ENCODE measurements at regions of chr1 and their contacts with region 1.

Region 1: DNA sequence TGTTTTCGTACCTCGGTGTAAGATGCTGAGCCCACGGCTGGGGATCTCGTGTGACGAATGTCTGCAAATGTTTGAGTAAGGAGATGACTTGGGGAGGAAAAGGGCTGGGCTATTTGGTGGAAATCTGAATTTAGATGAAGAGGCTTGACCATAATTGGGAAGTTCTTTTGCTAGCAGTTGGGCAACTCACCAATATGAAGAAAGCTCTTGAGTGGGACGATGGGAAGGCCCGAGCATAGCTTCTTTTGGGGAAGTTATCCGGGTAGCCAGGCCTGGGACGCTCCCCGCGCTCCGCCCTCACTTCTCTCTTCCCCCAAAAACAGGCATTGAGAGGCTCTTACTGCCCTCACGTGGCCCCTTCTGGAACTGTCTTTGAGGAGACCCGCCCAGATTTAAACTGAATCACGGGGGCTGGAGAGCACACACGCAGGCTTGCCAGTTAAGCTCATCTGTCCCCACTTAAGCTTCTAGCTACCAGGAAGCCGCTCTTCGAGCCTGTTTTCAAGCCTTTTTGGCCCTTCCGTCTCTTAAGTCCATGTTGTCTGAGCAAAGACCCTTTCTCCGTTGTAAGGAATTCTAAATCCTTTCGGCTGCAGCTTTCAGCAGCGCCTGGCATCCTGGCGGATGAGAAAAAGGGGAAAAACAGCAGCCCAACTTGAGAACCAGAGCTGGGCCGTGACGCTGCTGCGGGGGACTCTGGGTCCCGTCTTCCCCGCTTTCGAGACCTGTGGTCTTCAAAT is 93.1 kb downstream of the NID1 start:
- DNase-seq: peak; percentile 81 to 93 (median 89)
- ATAC-seq: peak; percentile 99
- H3K4me3 ChIP-seq: peak overlapping the region; percentile 20 to 46
- H3K4me3 Mint-ChIP-seq: peak overlapping the region; percentile 78
- H3K27ac ChIP-seq: peak overlapping the region; percentile 53 to 54
- H3K27ac Mint-ChIP-seq: peak overlapping the region; percentile 99
- H3K4me1 ChIP-seq: peaks cover 7% of the 10 kb centered on the region
- H3K4me1 Mint-ChIP-seq: peaks cover 16% of the 10 kb centered on the region
- H3K27me3 ChIP-seq: no peaks in the 10 kb centered on the region
- H3K27me3 Mint-ChIP-seq: no peaks in the 10 kb centered on the region
- CTCF ChIP-seq: peak; percentile 82

Region 2: GRCh38 chr1:235758931-235759330 is 212.8 kb before region 1 on chr1:
- CTCF ChIA-PET with region 1: interaction called, 10 read pairs
- POLR2A ChIA-PET with region 1: interaction called, 3 read pairs
- intact Hi-C with region 1: no loop called
- DNase-seq: no peak
- ATAC-seq: no peak
- H3K4me3 ChIP-seq: no peak overlapping the region
- H3K4me3 Mint-ChIP-seq: no peak overlapping the region
- H3K27ac ChIP-seq: no peak overlapping the region
- H3K27ac Mint-ChIP-seq: no peak overlapping the region
- H3K4me1 ChIP-seq: no peaks in the 10 kb centered on the region
- H3K4me1 Mint-ChIP-seq: no peaks in the 10 kb centered on the region
- H3K27me3 ChIP-seq: no peaks in the 10 kb centered on the region
- H3K27me3 Mint-ChIP-seq: no peaks in the 10 kb centered on the region
- CTCF ChIP-seq: no peak

Region 3: DNA sequence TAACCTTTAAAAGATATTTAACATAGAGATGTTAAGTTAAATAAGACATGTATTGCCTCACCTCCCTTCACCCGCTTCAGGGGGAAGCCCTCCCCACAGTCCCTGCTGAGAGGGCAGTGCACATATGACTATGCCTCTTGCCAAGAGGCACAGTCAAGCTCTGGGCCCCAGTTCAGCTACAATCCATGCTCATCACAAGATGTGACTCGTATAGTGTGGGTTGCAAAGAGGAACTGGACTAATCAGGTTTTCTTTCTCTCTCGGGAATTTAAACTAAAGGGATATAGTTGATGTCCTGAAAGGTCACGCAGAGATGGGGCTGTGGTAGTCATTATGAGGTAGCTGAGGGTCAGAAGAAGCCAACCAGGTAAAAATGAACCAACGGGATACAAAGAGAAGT is 140.6 kb before region 1 on chr1:
- CTCF ChIA-PET with region 1: interaction called, 11 read pairs
- POLR2A ChIA-PET with region 1: no interaction called
- intact Hi-C with region 1: no loop called
- DNase-seq: peak in 3 of 9 experiments; percentile 8 to 36 (median 14)
- ATAC-seq: no peak
- H3K4me3 ChIP-seq: no peak overlapping the region
- H3K4me3 Mint-ChIP-seq: no peak overlapping the region
- H3K27ac ChIP-seq: no peak overlapping the region
- H3K27ac Mint-ChIP-seq: no peak overlapping the region
- H3K4me1 ChIP-seq: no peaks in the 10 kb centered on the region
- H3K4me1 Mint-ChIP-seq: peaks cover 11% of the 10 kb centered on the region
- H3K27me3 ChIP-seq: no peaks in the 10 kb centered on the region
- H3K27me3 Mint-ChIP-seq: no peaks in the 10 kb centered on the region
- CTCF ChIP-seq: no peak

Region 4: GRCh38 chr1:235866913-235867845 is 104.6 kb before region 1 on chr1:
- CTCF ChIA-PET with region 1: interaction called, 103 read pairs
- POLR2A ChIA-PET with region 1: interaction called, 23 read pairs
- intact Hi-C with region 1: loop called (anchors 1 kb)
- DNase-seq: peak; percentile 96 to 99 (median 98)
- ATAC-seq: peak; percentile 75
- H3K4me3 ChIP-seq: peak overlapping the region; percentile 74 to 89
- H3K4me3 Mint-ChIP-seq: peak overlapping the region; percentile 95
- H3K27ac ChIP-seq: peak overlapping the region; percentile 95 to 99
- H3K27ac Mint-ChIP-seq: peak overlapping the region; percentile 99
- H3K4me1 ChIP-seq: peaks cover 27% of the 10 kb centered on the region
- H3K4me1 Mint-ChIP-seq: peaks cover 52% of the 10 kb centered on the region
- H3K27me3 ChIP-seq: no peaks in the 10 kb centered on the region
- H3K27me3 Mint-ChIP-seq: no peaks in the 10 kb centered on the region
- CTCF ChIP-seq: no peak

Region 5: GRCh38 chr1:235933017-235933765 is 38.5 kb before region 1 on chr1:
- CTCF ChIA-PET with region 1: interaction called, 10 read pairs
- POLR2A ChIA-PET with region 1: no interaction called
- intact Hi-C with region 1: no loop called
- DNase-seq: peak in 2 of 9 experiments; percentile 36 to 47
- ATAC-seq: no peak
- H3K4me3 ChIP-seq: no peak overlapping the region
- H3K4me3 Mint-ChIP-seq: no peak overlapping the region
- H3K27ac ChIP-seq: no peak overlapping the region
- H3K27ac Mint-ChIP-seq: no peak overlapping the region
- H3K4me1 ChIP-seq: no peaks in the 10 kb centered on the region
- H3K4me1 Mint-ChIP-seq: peaks cover 22% of the 10 kb centered on the region
- H3K27me3 ChIP-seq: no peaks in the 10 kb centered on the region
- H3K27me3 Mint-ChIP-seq: no peaks in the 10 kb centered on the region
- CTCF ChIP-seq: no peak

Measured in CD8-positive, alpha-beta T cell (primary cell).